PC-9 (cell line): ENCODE measurements at regions of chr17 and their contacts with region 1.

Region 1: GRCh38 chr17:46002311-46002972 is 3.4 kb downstream of the STH start:
- DNase-seq: peak; percentile 52 to 65
- H3K4me3 ChIP-seq: no peak overlapping the region
- H3K27ac ChIP-seq: no peak overlapping the region
- H3K4me1 ChIP-seq: no peaks in the 10 kb centered on the region
- H3K27me3 ChIP-seq: no peaks in the 10 kb centered on the region
- CTCF ChIP-seq: peak; percentile 98

Region 2: DNA sequence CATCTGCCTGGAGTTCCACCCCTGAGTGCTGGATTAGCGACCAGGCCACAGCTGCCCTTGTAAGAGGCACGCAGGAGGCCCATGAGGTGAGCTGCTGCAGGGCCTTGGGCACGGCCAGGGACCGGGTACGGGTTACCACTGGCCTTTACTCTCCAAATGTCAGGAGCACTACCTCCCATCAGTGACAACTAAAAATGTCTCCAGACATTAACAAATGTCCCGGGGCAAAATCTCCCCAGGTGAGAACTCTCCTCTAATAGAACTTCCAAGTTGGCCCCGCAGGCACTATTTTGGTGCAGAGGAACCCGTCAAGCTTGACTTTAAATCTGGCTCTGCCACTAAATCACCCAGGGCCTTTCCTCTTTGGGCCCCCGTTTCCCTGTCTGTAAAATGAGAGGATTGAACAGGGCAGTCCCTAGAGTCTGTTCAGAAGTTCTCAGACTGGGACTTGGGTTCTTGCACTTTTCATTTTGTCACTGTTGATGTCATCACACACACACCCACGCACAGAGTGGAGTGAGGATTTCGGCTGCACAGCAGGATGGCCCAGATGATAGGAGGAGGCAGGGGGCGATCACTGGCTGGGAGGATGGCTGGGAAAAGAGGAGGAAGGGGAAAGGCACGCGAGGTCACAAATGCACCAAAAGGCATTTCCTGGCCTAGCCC is 132.6 kb before region 1 on chr17:
- CTCF ChIA-PET with region 1: interaction called, 11 read pairs
- POLR2A ChIA-PET with region 1: no interaction called
- intact Hi-C with region 1: no loop called
- DNase-seq: no peak
- H3K4me3 ChIP-seq: no peak overlapping the region
- H3K27ac ChIP-seq: no peak overlapping the region
- H3K4me1 ChIP-seq: no peaks in the 10 kb centered on the region
- H3K27me3 ChIP-seq: peaks cover 96% of the 10 kb centered on the region
- CTCF ChIP-seq: no peak

Region 3: GRCh38 chr17:46154151-46154816 is 151.8 kb after region 1 on chr17:
- CTCF ChIA-PET with region 1: no interaction called
- POLR2A ChIA-PET with region 1: no interaction called
- intact Hi-C with region 1: no loop called
- DNase-seq: no peak
- H3K4me3 ChIP-seq: no peak overlapping the region
- H3K27ac ChIP-seq: no peak overlapping the region
- H3K4me1 ChIP-seq: no peaks in the 10 kb centered on the region; the same call in 1 of the 2 replicates
- H3K27me3 ChIP-seq: no peaks in the 10 kb centered on the region
- CTCF ChIP-seq: no peak

Region 4: DNA sequence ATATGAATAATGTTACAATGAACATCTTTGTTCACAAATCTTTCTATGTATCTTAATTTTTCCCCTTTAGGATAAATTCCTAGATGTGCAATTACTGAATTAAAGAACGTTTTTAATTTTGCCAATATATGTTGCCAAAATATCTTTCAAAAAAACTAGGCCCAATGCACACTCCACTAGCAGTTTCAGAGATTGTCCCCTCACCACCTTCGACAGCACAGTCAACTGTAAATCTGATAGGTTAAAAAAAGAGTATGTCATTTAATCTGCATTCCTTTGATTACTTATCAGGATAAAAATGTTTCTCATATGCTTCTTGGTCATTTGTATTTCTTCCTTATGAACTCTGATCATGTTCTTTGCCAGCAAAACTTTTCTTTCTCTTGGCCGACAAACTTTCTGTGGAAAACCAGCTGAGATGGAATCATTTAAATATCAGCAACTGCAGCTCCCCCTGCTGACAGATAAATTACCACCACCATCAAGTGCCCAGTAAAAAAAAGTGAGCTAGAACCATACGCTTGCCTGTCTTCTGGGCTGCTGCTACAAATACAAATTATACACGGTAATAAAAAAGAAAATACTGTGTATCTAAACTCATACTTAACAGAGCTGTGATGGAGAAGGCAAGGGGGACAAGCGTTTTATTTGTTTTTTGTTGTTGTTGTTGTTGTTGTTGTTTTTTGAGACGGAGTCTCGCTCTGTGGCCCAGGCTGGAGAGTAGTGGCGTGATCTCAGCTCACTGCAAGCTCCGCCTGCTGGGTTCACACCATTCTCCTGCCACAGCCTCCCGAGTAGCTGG is 210.4 kb after region 1 on chr17:
- CTCF ChIA-PET with region 1: interaction called, 8 read pairs
- POLR2A ChIA-PET with region 1: interaction called, 4 read pairs
- intact Hi-C with region 1: loop called (anchors 5 kb)
- DNase-seq: peak; percentile 22 to 46
- H3K4me3 ChIP-seq: no peak overlapping the region
- H3K27ac ChIP-seq: no peak overlapping the region
- H3K4me1 ChIP-seq: no peaks in the 10 kb centered on the region
- H3K27me3 ChIP-seq: no peaks in the 10 kb centered on the region
- CTCF ChIP-seq: peak; percentile 85

Region 5: DNA sequence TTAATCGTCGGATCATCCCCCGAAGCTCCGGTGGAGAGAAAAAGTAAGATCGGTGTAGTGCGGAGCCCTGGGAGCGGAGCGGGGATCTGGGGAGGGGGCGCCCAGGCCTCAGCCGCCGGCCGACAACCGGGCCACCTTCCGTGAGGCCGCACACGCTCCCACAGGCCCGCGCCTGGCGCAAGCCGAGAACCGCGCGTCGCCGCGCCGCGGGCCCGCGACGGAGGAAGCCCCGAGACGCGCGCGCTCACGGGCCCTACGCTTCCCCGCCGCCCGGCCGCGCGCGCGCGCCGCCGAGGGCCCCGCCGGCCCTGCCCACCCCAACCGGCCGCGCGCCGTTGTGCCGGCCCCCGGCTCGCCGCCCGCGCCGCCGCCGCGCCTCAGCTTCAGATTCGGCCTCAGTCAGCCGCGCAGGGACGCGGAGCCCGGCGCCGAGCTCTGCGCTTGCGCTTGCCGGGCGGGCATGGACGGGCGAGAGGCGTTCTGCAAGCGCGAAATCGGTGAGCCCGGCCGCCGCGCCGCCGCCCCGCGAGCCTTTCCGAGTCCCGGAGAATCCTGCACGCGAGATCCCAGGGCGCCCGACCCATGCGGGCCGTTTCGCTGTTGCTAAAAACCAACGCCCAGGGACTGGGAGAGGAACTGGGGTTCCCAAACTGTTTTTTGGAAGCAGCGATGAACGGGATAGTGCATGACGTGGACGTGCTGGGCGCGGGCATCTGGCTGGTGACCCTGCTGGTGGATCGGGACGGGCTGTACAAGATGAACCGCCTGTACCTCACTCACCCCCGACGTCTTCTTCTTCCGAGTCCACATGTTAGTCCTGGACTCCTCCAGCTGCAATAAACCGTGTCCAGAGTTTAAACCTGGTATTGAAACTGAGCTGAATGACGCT is 264.5 kb after region 1 on chr17:
- CTCF ChIA-PET with region 1: no interaction called
- POLR2A ChIA-PET with region 1: no interaction called
- intact Hi-C with region 1: no loop called
- DNase-seq: peak; percentile 55 to 86
- H3K4me3 ChIP-seq: peak overlapping the region; percentile 75
- H3K27ac ChIP-seq: peak overlapping the region; percentile 60
- H3K4me1 ChIP-seq: peaks cover 31% of the 10 kb centered on the region
- H3K27me3 ChIP-seq: no peaks in the 10 kb centered on the region
- CTCF ChIP-seq: no peak